Activated CD4-positive, alpha-beta T cell treated with anti-CD3 and anti-CD28 coated beads for 36 hours (primary cell): ENCODE measurements at regions of chr7 and their contacts with region 1.

Region 1: DNA sequence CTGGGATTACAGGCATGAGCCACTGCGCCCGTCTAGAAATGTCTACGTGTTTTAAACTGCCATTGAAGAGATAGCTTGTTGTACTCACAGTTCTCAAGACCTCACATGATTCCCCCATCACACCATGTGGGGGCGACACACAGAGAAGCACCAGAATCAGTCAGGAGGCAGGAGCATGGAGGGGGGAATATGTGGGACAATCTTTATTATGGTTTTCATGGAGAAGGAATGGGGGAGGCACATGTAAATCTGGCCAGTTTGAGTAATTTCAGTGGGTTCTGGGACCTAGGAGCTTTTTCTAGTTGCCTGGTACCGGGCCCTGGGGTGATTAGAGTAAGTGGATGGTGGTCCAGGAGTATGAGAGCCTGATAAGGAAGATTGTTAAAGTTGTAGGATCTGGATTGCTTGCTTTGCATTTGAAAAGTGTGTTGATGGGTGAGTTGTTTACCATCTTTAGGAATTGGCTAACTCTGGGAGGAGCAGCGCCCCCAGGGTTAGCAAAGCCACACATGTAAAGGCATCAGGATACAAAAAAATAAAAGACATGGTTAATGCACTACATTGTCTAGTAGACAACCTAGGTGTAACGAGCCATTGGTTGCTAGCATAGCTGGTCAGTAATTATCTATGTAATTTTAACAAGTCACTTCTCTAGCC is 85.4 kb upstream of the SLC13A1 start:
- DNase-seq: no peak
- ATAC-seq: no peak
- H3K4me3 Mint-ChIP-seq: no peak overlapping the region
- H3K27ac Mint-ChIP-seq: no peak overlapping the region
- H3K4me1 Mint-ChIP-seq: no peaks in the 10 kb centered on the region
- H3K27me3 Mint-ChIP-seq: no peaks in the 10 kb centered on the region

Region 2: DNA sequence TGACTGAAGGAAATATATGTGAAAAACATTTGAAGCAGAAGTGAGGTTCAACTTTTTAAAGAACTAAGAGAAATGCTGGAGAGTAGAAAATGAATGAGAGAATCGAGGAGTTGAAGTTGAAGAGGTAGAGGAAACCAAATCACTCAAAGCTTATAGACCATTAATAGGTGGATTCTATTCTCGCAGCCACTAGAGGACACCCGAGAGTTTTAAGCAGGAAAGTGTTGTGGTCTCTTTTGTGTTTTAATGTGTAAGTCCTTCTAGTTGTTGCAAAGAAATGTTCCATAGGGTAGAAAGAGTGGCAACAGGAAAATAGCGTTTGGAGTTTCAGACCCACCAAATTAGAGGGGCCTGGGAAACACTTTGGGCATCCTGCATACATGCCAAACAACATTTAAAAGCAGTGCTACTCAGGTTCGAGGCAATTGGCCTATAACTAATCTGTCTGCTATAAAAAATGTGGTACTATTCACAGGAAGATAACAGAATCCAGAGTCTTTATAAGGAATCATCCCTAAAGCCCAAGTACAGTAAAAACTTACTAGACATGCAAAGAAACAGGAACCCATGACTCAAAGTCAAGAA is 214.4 kb before region 1 on chr7:
- CTCF ChIA-PET with region 1: no interaction called
- POLR2A ChIA-PET with region 1: no interaction called
- intact Hi-C with region 1: no loop called
- DNase-seq: no peak
- ATAC-seq: no peak
- H3K4me3 Mint-ChIP-seq: no peak overlapping the region
- H3K27ac Mint-ChIP-seq: no peak overlapping the region
- H3K4me1 Mint-ChIP-seq: no peaks in the 10 kb centered on the region
- H3K27me3 Mint-ChIP-seq: no peaks in the 10 kb centered on the region

Region 3: GRCh38 chr7:123271231-123271630 is 14.0 kb before region 1 on chr7:
- CTCF ChIA-PET with region 1: no interaction called
- POLR2A ChIA-PET with region 1: no interaction called
- intact Hi-C with region 1: loop called in 1 of 2 experiments (anchors 1 kb)
- DNase-seq: no peak
- ATAC-seq: no peak
- H3K4me3 Mint-ChIP-seq: no peak overlapping the region
- H3K27ac Mint-ChIP-seq: no peak overlapping the region
- H3K4me1 Mint-ChIP-seq: no peaks in the 10 kb centered on the region
- H3K27me3 Mint-ChIP-seq: no peaks in the 10 kb centered on the region